ENCODE measurements at regions of chr12 and their contacts with region 1.

Region 1: DNA sequence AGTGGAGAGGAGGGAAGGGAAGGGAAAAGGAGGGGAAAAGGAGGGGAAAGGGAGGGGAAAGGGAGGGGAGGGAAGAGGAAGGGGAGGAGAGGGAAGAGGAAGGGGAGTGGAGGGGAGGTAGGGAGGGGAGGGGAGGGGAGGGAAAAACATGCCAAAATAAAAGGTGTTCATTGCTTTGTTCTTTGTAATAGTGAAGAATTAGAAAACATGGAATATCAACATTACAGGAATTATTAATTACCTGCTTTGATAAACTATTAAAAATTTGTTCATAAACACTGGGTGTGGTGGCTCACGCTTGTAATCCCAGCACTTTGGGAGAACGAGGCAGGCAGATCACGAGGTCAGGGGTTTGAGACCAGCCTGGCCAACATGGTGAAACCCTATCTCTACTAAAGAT is 579.2 kb downstream of the MED13L start:
- DNase-seq: no peak
- ATAC-seq: no peak
- H3K4me3 ChIP-seq: no peak overlapping the region
- H3K27ac ChIP-seq: no peak overlapping the region
- H3K4me1 ChIP-seq: no peaks in the 10 kb centered on the region
- H3K27me3 ChIP-seq: no peaks in the 10 kb centered on the region
- CTCF ChIP-seq: no peak

Region 2: DNA sequence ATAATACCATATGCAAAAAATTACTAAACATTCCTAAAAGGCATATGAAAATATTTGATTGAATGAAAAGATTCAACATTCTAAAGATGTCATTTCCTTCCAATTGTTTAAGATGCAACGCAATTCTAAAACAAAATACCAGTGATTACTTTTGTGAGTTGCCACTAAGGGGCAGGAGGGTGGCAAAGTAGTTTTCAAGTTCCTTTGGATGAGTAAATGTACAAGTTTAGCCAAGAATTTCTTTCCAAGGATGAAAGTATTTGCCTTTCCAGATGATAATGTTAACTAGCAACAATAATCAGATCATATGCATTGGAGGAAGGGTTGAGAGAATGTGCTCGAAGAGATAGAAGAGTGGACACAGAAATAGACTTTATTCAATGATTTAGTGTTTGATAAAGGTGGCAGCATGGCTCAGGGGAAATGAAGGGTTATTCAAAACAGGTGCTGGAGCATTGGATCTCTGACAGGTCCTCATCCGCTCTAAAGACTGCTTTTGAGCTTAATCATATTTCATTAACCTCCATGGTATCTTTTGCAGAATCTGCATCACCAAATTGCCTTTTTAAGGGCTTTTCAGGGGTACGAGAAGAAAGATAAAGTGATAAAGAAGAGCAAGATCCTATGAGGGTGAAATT is 335.8 kb before region 1 on chr12:
- CTCF ChIA-PET with region 1: no interaction called
- POLR2A ChIA-PET with region 1: no interaction called
- in situ Hi-C with region 1: no loop called
- intact Hi-C with region 1: no loop called
- DNase-seq: no peak
- ATAC-seq: no peak
- H3K4me3 ChIP-seq: no peak overlapping the region
- H3K27ac ChIP-seq: no peak overlapping the region
- H3K4me1 ChIP-seq: no peaks in the 10 kb centered on the region
- H3K27me3 ChIP-seq: no peaks in the 10 kb centered on the region
- CTCF ChIP-seq: no peak

Region 3: DNA sequence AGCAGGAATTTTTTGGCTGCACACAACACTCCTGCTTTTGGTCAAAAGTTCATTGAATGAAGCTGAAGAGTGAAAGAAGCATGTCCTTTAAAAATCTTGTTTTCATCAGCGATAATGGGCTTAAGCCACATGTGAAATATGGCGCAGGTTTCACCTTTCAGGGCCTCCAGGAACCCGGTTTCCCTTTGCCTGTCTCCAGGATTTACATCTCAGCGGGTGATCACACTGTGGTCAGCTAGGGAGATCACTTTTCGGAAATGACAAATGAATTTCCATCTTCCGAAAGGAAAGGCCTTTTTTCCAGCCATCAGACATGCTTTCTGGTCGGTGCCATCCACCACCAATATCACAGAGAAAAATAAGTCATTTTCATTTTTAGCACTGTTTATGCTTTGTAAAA is 287.1 kb before region 1 on chr12:
- CTCF ChIA-PET with region 1: no interaction called
- POLR2A ChIA-PET with region 1: no interaction called
- in situ Hi-C with region 1: no loop called
- intact Hi-C with region 1: no loop called
- DNase-seq: no peak
- ATAC-seq: no peak
- H3K4me3 ChIP-seq: no peak overlapping the region
- H3K27ac ChIP-seq: no peak overlapping the region
- H3K4me1 ChIP-seq: no peaks in the 10 kb centered on the region
- H3K27me3 ChIP-seq: peaks cover 6% of the 10 kb centered on the region; the same call in 1 of the 2 replicates
- CTCF ChIP-seq: no peak

Region 4: GRCh38 chr12:115660211-115660805 is 37.9 kb before region 1 on chr12:
- CTCF ChIA-PET with region 1: interaction called, 12 read pairs
- POLR2A ChIA-PET with region 1: no interaction called
- in situ Hi-C with region 1: no loop called
- intact Hi-C with region 1: no loop called
- DNase-seq: no peak
- ATAC-seq: no peak
- H3K4me3 ChIP-seq: no peak overlapping the region
- H3K27ac ChIP-seq: no peak overlapping the region
- H3K4me1 ChIP-seq: no peaks in the 10 kb centered on the region
- H3K27me3 ChIP-seq: no peaks in the 10 kb centered on the region
- CTCF ChIP-seq: no peak

Measured in Panc1 (cell line).